ENCODE measurements at regions of chr2 and their contacts with region 1.

Region 1: DNA sequence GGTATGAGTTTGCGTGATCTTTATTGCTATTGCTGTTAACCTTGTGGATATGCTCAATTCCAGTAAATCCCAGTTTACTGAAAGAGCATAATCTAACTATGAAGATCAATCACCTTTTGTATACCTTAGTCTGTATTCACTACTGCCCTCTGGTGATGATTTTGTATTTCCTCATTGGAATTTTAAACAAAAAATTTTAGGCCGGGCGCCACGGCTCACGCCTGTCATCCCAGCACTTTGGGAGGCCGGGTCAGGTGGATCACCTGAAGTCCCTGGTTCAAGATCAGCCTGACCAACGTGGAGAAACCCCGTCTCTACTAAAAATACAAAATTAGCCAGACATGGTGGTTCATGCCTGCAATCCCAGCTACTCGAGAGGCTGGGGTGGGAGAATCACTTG is 5.1 kb downstream of the COMMD1 start:
- DNase-seq: no peak
- ATAC-seq: no peak
- H3K4me3 ChIP-seq: no peak overlapping the region
- H3K4me3 Mint-ChIP-seq: no peak overlapping the region
- H3K27ac ChIP-seq: no peak overlapping the region
- H3K27ac Mint-ChIP-seq: no peak overlapping the region
- H3K4me1 ChIP-seq: peaks cover 8% of the 10 kb centered on the region
- H3K4me1 Mint-ChIP-seq: peaks cover 23% of the 10 kb centered on the region
- H3K27me3 ChIP-seq: no peaks in the 10 kb centered on the region
- H3K27me3 Mint-ChIP-seq: no peaks in the 10 kb centered on the region
- CTCF ChIP-seq: no peak

Region 2: DNA sequence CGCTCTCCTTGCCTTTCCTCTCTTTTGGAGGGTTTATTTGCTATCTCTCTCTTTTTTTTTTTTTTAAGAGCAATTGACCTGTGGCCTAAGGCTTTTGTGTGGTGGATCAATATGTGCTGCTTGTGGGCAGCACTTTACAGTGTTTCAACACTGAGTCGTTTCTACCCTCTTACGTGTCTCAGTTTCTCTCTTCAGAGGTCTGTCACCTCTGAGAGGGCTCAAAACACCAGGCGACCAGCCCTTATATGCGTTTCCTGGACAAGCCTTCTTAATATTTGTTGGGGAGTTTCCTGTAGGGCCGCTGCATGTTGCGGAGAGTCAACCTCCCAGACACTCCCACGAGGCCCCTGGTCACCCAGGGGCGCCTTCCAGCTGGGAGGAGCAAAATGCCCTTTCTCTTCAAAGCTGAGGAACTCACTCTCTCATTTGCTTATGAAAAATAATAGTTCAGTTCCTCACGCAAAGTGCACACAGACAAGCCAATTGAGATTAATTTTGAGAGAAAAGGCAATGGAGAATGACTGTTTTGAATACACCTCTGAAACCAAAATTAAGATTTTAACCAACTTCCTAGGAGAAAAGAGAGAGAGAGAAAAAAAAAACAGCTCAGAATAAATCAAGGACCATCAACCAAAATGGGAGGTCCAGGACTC is 189.0 kb after region 1 on chr2:
- CTCF ChIA-PET with region 1: no interaction called
- POLR2A ChIA-PET with region 1: no interaction called
- intact Hi-C with region 1: no loop called
- DNase-seq: no peak
- ATAC-seq: no peak
- H3K4me3 ChIP-seq: no peak overlapping the region
- H3K4me3 Mint-ChIP-seq: no peak overlapping the region
- H3K27ac ChIP-seq: no peak overlapping the region
- H3K27ac Mint-ChIP-seq: no peak overlapping the region
- H3K4me1 ChIP-seq: no peaks in the 10 kb centered on the region
- H3K4me1 Mint-ChIP-seq: no peaks in the 10 kb centered on the region
- H3K27me3 ChIP-seq: no peaks in the 10 kb centered on the region
- H3K27me3 Mint-ChIP-seq: no peaks in the 10 kb centered on the region
- CTCF ChIP-seq: no peak

Region 3: DNA sequence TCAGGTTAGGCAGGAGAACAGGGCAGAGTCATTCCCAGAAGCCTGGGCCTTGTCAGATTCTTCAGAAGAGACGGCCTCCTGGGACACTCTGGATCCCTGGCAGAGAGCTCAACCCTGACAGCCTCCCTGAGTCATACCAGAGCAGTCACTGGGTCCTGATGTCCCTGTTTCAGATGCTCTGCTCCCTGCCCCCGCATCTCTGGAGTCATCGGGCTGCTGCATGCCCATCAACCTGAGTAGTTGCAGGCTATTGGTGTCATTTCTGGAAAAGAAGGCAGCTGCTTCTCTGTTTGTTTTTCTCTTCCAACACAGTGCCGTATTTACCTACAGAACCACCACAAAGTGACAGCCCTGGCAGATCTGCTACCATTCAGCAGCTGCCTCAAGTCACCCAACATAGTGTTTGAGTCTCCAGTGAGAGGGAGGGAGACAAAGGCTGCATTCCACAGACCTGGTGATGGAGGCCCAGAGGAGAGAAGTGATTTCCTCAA is 430.4 kb after region 1 on chr2:
- CTCF ChIA-PET with region 1: no interaction called
- POLR2A ChIA-PET with region 1: no interaction called
- intact Hi-C with region 1: loop called in 1 of 2 experiments (anchors 5 kb)
- DNase-seq: no peak
- ATAC-seq: no peak
- H3K4me3 ChIP-seq: no peak overlapping the region
- H3K4me3 Mint-ChIP-seq: no peak overlapping the region
- H3K27ac ChIP-seq: no peak overlapping the region
- H3K27ac Mint-ChIP-seq: no peak overlapping the region
- H3K4me1 ChIP-seq: no peaks in the 10 kb centered on the region
- H3K4me1 Mint-ChIP-seq: no peaks in the 10 kb centered on the region
- H3K27me3 ChIP-seq: no peaks in the 10 kb centered on the region
- H3K27me3 Mint-ChIP-seq: no peaks in the 10 kb centered on the region
- CTCF ChIP-seq: no peak

Measured in CD4-positive, alpha-beta T cell (primary cell).